ENCODE measurements at regions of chr1 and their contacts with region 1.

Region 1: DNA sequence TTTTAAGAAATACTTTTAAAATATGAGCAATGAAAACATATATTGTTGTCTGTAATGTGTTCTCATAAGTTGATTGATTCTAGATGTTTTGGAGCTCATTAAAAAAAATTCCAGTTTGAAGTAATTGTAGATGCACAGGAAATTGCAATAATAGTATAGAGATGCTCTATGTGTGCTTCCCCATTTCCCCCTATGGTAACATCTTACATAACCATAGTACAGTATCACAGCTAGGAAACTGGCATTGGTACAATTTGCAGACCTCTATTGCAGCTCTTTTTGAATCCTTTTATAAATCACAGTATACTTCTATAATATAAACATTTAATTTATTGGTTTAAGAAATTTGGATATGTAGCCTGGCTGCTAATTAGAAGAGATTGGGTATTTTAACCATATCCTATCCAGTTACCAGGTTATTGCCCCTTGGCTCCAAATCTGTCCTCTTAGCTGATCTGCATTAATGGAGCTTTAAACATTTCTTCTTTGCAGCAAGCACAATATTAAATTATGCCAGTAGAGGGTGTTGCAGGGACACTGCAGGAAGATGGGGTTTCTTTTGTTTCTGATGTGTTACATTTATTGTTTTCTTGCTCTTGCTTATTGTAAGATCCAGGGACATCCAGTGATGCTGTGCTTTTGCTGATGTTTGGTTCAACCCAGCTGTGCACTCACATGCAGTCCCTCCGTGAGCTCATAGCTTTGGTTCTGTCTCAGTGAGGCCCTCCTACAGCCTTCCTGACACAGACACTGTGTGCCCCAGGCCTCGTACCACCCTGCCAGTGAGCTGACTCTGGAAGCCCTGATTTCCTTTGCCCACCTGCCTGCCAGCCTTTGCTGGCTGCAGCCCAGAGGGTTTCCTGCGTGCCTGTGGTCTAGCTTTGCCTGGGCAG is 103.3 kb downstream of the RABGAP1L start:
- DNase-seq: peak; percentile 50 to 53
- ATAC-seq: peak; percentile 84 to 90
- H3K4me3 ChIP-seq: no peak overlapping the region
- H3K27ac ChIP-seq: no peak overlapping the region
- H3K4me1 ChIP-seq: no peaks in the 10 kb centered on the region
- CTCF ChIP-seq: peak; percentile 89
- EP300 ChIP-seq: no peak
- POLR2A ChIP-seq: no peak
- RAD21 ChIP-seq: peak; percentile 84 to 86

Region 2: GRCh38 chr1:174114788-174115448 is 147.7 kb before region 1 on chr1:
- CTCF ChIA-PET with region 1: no interaction called
- POLR2A ChIA-PET with region 1: no interaction called
- DNase-seq: peak; percentile 51 to 81
- ATAC-seq: peak; percentile 95 to 100
- H3K4me3 ChIP-seq: no peak overlapping the region
- H3K27ac ChIP-seq: no peak overlapping the region
- H3K4me1 ChIP-seq: peaks cover 9% of the 10 kb centered on the region; the same call in 1 of the 3 replicates
- CTCF ChIP-seq: peak; percentile 37
- EP300 ChIP-seq: no peak
- POLR2A ChIP-seq: no peak
- RAD21 ChIP-seq: 0 out of 5 replicates have a peak, but pooled peaks of 1 of the 2 experiments have one; percentile 14

Region 3: DNA sequence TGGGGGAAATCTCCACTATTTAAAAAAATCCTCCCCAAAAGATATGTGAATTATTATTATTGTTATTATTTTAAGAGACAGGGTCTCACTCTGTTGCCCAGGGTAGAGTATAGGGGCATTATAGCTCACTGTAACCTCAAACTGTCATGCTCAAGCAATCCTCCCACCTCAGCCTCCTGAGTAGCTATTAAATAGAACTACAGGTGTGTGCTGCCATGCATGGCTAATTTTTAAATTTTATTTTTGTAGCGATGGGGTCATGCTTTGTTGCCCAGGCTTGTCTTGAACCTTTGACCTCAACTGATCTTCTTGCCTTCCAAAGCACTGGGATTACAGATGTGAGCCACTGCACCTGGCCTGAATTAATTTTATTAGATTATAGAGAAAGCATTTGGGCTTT is 13.5 kb after region 1 on chr1:
- CTCF ChIA-PET with region 1: interaction called, 16 read pairs
- POLR2A ChIA-PET with region 1: no interaction called
- DNase-seq: no peak
- ATAC-seq: no peak
- H3K4me3 ChIP-seq: no peak overlapping the region
- H3K27ac ChIP-seq: no peak overlapping the region
- H3K4me1 ChIP-seq: no peaks in the 10 kb centered on the region
- CTCF ChIP-seq: no peak
- EP300 ChIP-seq: no peak
- POLR2A ChIP-seq: no peak
- RAD21 ChIP-seq: no peak

Region 4: DNA sequence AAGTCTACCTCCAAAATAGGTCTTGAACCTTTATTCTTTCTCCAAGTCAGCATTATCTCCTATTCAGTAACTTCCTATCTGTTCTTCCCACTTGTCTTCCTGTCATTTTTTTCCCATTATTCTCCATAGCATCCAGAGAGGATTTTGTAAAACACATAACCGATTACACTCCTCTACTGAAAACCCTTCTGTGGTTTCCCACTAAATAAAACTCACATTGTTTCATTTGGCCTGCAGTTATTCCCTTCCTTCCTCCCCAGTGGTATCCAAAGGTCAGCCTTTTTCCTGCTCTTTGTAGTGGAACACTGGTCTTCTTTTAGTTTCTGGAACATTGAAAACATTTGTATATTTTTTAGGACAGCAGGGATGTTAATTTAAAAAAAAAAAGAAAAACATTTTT is 451.2 kb after region 1 on chr1:
- CTCF ChIA-PET with region 1: interaction called, 17 read pairs
- POLR2A ChIA-PET with region 1: no interaction called
- DNase-seq: no peak
- ATAC-seq: no peak
- H3K4me3 ChIP-seq: no peak overlapping the region
- H3K27ac ChIP-seq: no peak overlapping the region
- H3K4me1 ChIP-seq: no peaks in the 10 kb centered on the region
- CTCF ChIP-seq: no peak
- EP300 ChIP-seq: no peak
- POLR2A ChIP-seq: no peak
- RAD21 ChIP-seq: no peak

Region 5: GRCh38 chr1:174719194-174719593 is 456.6 kb after region 1 on chr1:
- CTCF ChIA-PET with region 1: interaction called, 17 read pairs
- POLR2A ChIA-PET with region 1: no interaction called
- DNase-seq: no peak
- ATAC-seq: no peak
- H3K4me3 ChIP-seq: no peak overlapping the region
- H3K27ac ChIP-seq: no peak overlapping the region
- H3K4me1 ChIP-seq: no peaks in the 10 kb centered on the region
- CTCF ChIP-seq: no peak
- EP300 ChIP-seq: no peak
- POLR2A ChIP-seq: no peak
- RAD21 ChIP-seq: no peak

Region 6: DNA sequence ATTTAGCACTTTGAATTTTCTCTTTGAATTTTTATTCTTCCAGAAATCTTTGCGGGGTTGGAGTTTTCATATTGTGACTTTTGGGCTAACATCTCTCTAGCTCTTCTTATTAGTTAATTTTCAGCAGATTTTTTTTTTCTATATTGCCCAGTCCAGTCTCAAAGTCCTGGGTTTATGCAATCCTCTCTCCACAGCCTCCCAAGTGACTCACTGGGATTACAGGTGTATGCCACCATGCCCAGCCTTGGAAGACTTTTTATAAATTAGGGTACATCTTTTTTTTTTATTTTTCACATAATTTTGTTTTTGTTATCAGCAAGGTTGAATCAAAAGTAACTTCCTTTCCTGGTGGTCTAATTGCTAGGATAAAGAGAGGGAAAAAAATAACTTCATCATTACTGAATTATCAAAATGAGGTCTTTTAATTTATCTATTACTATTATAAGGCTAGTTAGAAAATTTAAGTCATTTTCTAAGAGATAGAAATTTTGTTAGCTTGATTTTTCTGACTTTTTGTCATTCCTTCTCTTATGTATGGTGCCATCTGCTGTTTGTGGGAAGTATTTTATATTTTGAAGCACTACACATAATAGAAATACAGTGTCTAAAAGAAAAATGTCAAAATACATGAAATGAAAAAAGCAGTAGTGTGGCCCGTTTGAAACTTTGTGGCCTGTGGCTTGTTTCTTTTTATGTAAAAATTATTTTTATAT is 463.7 kb after region 1 on chr1:
- CTCF ChIA-PET with region 1: interaction called, 54 read pairs
- POLR2A ChIA-PET with region 1: no interaction called
- DNase-seq: peak; percentile 8 to 35
- ATAC-seq: no peak; a peak in 1 of 6 replicates
- H3K4me3 ChIP-seq: no peak overlapping the region
- H3K27ac ChIP-seq: no peak overlapping the region
- H3K4me1 ChIP-seq: no peaks in the 10 kb centered on the region
- CTCF ChIP-seq: peak; percentile 66
- EP300 ChIP-seq: no peak
- POLR2A ChIP-seq: no peak
- RAD21 ChIP-seq: peak; percentile 54 to 63

Region 7: GRCh38 chr1:174743654-174744561 is 481.3 kb after region 1 on chr1:
- CTCF ChIA-PET with region 1: interaction called, 70 read pairs
- POLR2A ChIA-PET with region 1: interaction called, 3 read pairs
- DNase-seq: peak; percentile 16 to 42
- ATAC-seq: peak in 1 of 2 experiments; percentile 46; a peak in 3 of 6 replicates
- H3K4me3 ChIP-seq: no peak overlapping the region
- H3K27ac ChIP-seq: no peak overlapping the region
- H3K4me1 ChIP-seq: no peaks in the 10 kb centered on the region
- CTCF ChIP-seq: peak; percentile 88
- EP300 ChIP-seq: no peak
- POLR2A ChIP-seq: no peak
- RAD21 ChIP-seq: peak; percentile 72 to 80